Heart left ventricle (tissue), 16 donors: ENCODE measurements at regions of chrX and their contacts with region 1.

Region 1: DNA sequence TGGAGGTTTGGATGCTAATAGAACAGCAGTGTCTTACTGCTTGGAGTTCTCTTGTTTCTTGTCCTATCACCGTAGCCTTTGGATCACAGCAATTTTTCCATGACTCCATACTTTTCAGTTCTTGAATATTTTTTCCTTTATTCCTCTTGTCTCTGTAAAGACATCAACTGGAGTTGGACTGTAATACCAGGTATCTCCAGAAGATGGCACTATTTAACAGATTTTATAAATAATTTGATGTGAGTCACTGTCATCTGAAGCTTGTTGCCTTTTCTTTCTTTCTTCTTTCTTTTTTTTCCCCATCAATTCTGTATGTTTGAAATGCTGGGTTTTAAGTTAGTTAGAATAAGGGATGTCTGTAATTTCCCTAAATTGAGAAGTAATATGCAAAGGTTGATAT is 24.1 kb downstream of the HPRT1 start:
- DNase-seq: no peak
- ATAC-seq: no peak
- H3K4me3 ChIP-seq: no peak overlapping the region
- H3K27ac ChIP-seq: no peak overlapping the region
- H3K4me1 ChIP-seq: no peaks in the 10 kb centered on the region
- H3K27me3 ChIP-seq: no peaks in the 10 kb centered on the region
- CTCF ChIP-seq: peak; percentile 40 to 67 (median 58)
- POLR2A ChIP-seq: no peak

Region 2: GRCh38 chrX:134324359-134324758 is 159.7 kb before region 1 on chrX:
- intact Hi-C with region 1: no loop called
- DNase-seq: no peak
- ATAC-seq: no peak
- H3K4me3 ChIP-seq: no peak overlapping the region
- H3K27ac ChIP-seq: no peak overlapping the region
- H3K4me1 ChIP-seq: no peaks in the 10 kb centered on the region
- H3K27me3 ChIP-seq: peaks cover 0 to 6% (median 0%) of the 10 kb centered on the region in 9 donors
- CTCF ChIP-seq: no peak
- POLR2A ChIP-seq: no peak

Region 3: GRCh38 chrX:134388161-134389109 is 95.6 kb before region 1 on chrX:
- intact Hi-C with region 1: no loop called
- DNase-seq: no peak
- ATAC-seq: no peak
- H3K4me3 ChIP-seq: no peak overlapping the region
- H3K27ac ChIP-seq: no peak overlapping the region
- H3K4me1 ChIP-seq: no peaks in the 10 kb centered on the region
- H3K27me3 ChIP-seq: peaks cover 0 to 6% (median 0%) of the 10 kb centered on the region in 9 donors
- CTCF ChIP-seq: no peak
- POLR2A ChIP-seq: no peak

Region 4: DNA sequence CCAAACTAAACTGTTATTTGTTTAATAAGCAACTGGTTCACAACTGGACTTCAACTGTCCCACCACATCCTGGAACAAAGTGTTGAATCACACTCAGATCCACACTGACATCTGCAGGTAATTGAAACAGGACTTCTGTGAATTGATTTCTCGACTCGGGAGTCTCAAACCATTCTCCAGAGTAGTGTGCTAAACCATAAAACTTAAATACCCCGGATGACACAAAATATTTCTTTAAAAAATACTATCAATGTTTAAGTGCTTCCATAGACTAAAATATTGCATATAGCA is 269.6 kb after region 1 on chrX:
- intact Hi-C with region 1: loop called in 4 of 10 experiments (anchors 5 to 10 kb)
- DNase-seq: no peak
- ATAC-seq: peak in 3 of 4 donors; percentile 39 to 50 (median 49)
- H3K4me3 ChIP-seq: no peak overlapping the region
- H3K27ac ChIP-seq: no peak overlapping the region
- H3K4me1 ChIP-seq: no peaks in the 10 kb centered on the region
- H3K27me3 ChIP-seq: peaks cover 0 to 7% (median 0%) of the 10 kb centered on the region in 9 donors
- CTCF ChIP-seq: peak in 11 of 12 donors; percentile 13 to 56 (median 43)
- POLR2A ChIP-seq: no peak

Region 5: GRCh38 chrX:134782796-134783195 is 298.8 kb after region 1 on chrX:
- intact Hi-C with region 1: loop called in 3 of 10 experiments (anchors 5 to 10 kb)
- DNase-seq: no peak
- ATAC-seq: no peak
- H3K4me3 ChIP-seq: no peak overlapping the region
- H3K27ac ChIP-seq: no peak overlapping the region
- H3K4me1 ChIP-seq: no peaks in the 10 kb centered on the region
- H3K27me3 ChIP-seq: no peaks in the 10 kb centered on the region
- CTCF ChIP-seq: peak; percentile 20 to 63 (median 48)
- POLR2A ChIP-seq: no peak

Region 6: GRCh38 chrX:134908356-134908755 is 424.3 kb after region 1 on chrX:
- intact Hi-C with region 1: loop called in 1 of 10 experiments (anchors 5 kb)
- DNase-seq: no peak
- ATAC-seq: peak in 2 of 4 donors; percentile 31 to 44
- H3K4me3 ChIP-seq: no peak overlapping the region
- H3K27ac ChIP-seq: no peak overlapping the region
- H3K4me1 ChIP-seq: peaks cover 0 to 3% (median 0%) of the 10 kb centered on the region in 12 donors
- H3K27me3 ChIP-seq: no peaks in the 10 kb centered on the region
- CTCF ChIP-seq: peak in 3 of 12 donors; percentile 16 to 23 (median 20)
- POLR2A ChIP-seq: no peak